ENCODE measurements at regions of chr18 and their contacts with region 1.

Region 1: DNA sequence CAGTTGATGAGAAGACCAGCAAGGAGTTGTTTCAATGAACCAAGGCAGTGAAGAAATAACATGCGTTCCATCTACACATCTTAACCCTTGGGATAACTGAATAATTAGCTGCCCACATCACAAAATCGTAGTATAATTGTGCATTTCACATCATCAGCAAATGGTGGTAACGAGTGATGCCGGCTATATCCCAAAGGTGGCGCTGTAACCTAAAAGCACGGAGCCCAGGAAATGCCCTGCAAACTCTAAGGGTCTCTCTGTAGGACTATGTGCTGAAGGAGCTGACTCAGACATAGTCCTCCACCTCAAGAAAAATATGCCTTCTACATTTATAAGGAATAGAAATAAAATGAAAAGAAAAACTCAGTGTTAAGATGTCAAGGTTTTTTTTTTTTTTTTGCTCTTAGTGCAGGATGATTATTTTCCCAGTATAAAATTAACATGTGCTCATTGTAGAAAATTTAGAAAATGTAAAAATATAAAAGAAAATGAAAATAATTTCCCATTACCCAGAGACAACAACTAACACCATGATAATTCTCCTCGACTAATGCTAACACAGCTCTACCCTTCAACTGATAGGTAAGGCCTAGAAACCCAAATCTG is 23.1 kb upstream of the DSG3 start:
- DNase-seq: peak; percentile 20
- ATAC-seq: peak; percentile 51; the same call in 1 of the 2 replicates
- H3K4me3 ChIP-seq: no peak overlapping the region
- H3K27ac ChIP-seq: no peak overlapping the region
- H3K4me1 ChIP-seq: no peaks in the 10 kb centered on the region
- H3K27me3 ChIP-seq: no peaks in the 10 kb centered on the region
- CTCF ChIP-seq: peak; percentile 43
- POLR2A ChIP-seq: no peak
- RAD21 ChIP-seq: peak; percentile 57

Region 2: GRCh38 chr18:31329787-31330438 is 94.6 kb before region 1 on chr18:
- CTCF ChIA-PET with region 1: no interaction called
- POLR2A ChIA-PET with region 1: no interaction called
- dilution Hi-C with region 1: no loop called
- in situ Hi-C with region 1: no loop called
- intact Hi-C with region 1: no loop called
- DNase-seq: no peak
- ATAC-seq: no peak
- H3K4me3 ChIP-seq: no peak overlapping the region
- H3K27ac ChIP-seq: no peak overlapping the region
- H3K4me1 ChIP-seq: no peaks in the 10 kb centered on the region
- H3K27me3 ChIP-seq: no peaks in the 10 kb centered on the region
- CTCF ChIP-seq: no peak
- POLR2A ChIP-seq: no peak
- RAD21 ChIP-seq: no peak

Region 3: GRCh38 chr18:31506024-31506742 is 81.7 kb after region 1 on chr18:
- CTCF ChIA-PET with region 1: no interaction called
- POLR2A ChIA-PET with region 1: no interaction called
- dilution Hi-C with region 1: no loop called
- in situ Hi-C with region 1: no loop called
- intact Hi-C with region 1: loop called (anchors 5 kb)
- DNase-seq: peak; percentile 21
- ATAC-seq: no peak
- H3K4me3 ChIP-seq: no peak overlapping the region
- H3K27ac ChIP-seq: no peak overlapping the region
- H3K4me1 ChIP-seq: no peaks in the 10 kb centered on the region
- H3K27me3 ChIP-seq: no peaks in the 10 kb centered on the region
- CTCF ChIP-seq: peak; percentile 30
- POLR2A ChIP-seq: no peak
- RAD21 ChIP-seq: peak; percentile 35

Region 4: DNA sequence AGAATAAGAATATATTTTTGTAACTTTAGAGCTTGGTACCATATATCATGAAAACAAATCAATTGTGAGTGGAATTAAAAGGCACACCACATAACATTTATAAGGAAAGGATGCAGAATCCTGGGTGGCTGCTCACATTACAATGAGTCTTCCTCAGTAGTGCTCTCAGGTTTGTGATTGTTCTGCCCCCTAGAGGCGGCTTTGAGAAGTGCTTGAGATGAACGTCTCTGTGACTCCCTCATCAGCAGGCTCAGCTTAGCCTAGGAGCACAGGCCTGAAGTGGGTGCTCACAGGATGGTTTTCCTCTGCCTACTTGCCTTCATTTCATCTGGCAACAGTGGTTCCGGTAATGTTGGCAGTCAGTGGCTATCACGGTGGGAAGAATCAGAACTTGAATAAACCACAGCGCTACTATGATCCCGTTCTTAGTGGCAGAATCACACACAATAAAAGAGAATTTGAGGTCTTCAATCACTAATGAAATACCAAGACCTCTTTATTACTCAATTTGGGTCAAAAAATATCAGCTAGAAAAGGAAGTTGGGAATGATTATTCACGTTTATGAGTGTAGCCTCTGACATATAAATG is 298.0 kb after region 1 on chr18:
- CTCF ChIA-PET with region 1: no interaction called
- POLR2A ChIA-PET with region 1: no interaction called
- dilution Hi-C with region 1: no loop called
- in situ Hi-C with region 1: no loop called
- intact Hi-C with region 1: loop called (anchors 2 kb)
- DNase-seq: peak; percentile 63
- ATAC-seq: peak; percentile 98
- H3K4me3 ChIP-seq: no peak overlapping the region
- H3K27ac ChIP-seq: no peak overlapping the region
- H3K4me1 ChIP-seq: no peaks in the 10 kb centered on the region
- H3K27me3 ChIP-seq: peaks cover 14% of the 10 kb centered on the region
- CTCF ChIP-seq: peak; percentile 63
- POLR2A ChIP-seq: no peak
- RAD21 ChIP-seq: peak; percentile 56

Region 5: GRCh38 chr18:31819106-31819924 is 394.8 kb after region 1 on chr18:
- CTCF ChIA-PET with region 1: no interaction called
- POLR2A ChIA-PET with region 1: no interaction called
- dilution Hi-C with region 1: no loop called
- in situ Hi-C with region 1: no loop called
- intact Hi-C with region 1: loop called (anchors 10 kb)
- DNase-seq: peak; percentile 52
- ATAC-seq: peak; percentile 92
- H3K4me3 ChIP-seq: no peak overlapping the region
- H3K27ac ChIP-seq: no peak overlapping the region
- H3K4me1 ChIP-seq: no peaks in the 10 kb centered on the region
- H3K27me3 ChIP-seq: no peaks in the 10 kb centered on the region
- CTCF ChIP-seq: peak; percentile 73
- POLR2A ChIP-seq: no peak
- RAD21 ChIP-seq: peak; percentile 56